ENCODE measurements at regions of chr17 and their contacts with region 1.

Region 1: DNA sequence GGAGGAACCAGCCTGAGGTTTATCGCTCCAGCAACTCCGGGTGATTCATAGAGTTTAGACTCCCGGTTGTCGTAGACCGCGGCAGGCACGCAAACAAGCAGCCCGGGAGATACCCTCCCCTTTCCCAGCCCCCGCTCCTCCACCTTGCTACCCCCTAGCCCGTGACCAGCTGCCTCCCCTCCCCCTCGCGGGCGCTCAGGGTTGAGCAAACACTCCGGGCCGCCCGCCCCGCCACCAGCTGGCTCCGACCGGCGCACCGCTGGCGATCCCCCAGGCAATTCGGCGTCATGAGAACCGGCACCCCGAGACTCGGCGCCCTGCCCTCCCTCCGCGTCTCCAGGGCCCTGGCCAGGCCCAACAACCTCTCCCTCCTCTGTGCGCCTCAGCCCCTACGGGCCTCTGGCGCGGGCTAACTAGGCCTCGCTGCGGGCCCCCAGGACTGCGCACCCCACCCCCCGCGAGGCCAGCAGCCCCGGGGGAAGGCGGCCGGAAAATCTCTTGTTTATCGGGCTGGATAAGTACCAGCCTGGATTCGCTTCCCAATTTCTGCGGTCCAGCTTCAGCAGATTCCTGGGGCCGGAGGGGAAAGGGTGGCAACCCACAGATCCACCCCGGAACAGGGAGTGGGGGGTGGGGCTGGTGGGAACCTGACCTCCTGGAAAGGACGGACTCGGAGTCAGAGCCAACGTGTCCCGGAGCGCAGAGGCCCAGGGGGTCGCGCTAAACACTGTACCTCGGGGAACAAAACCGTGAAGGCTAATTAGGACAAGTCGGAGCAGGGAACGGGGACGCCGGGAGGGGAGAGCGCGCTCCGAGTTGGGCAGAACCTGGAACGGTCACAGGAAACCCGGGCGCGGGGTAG is 951 bp upstream of the GPRC5C start:
- DNase-seq: peak; percentile 85 to 86
- ATAC-seq: peak; percentile 61 to 83 (median 73)
- H3K4me3 ChIP-seq: peak overlapping the region; percentile 61 to 83 (median 74)
- H3K27ac ChIP-seq: peak overlapping the region; percentile 83 to 99 (median 96)
- H3K4me1 ChIP-seq: peaks cover 8 to 80% (median 48%) of the 10 kb centered on the region in 9 donors
- H3K27me3 ChIP-seq: peaks cover 0 to 61% (median 0%) of the 10 kb centered on the region in 7 donors
- CTCF ChIP-seq: no peak

Region 2: GRCh38 chr17:74457146-74457819 is 26.3 kb after region 1 on chr17:
- intact Hi-C with region 1: loop called in 1 of 10 experiments (anchors 2 kb)
- DNase-seq: peak; percentile 81 to 84
- ATAC-seq: peak in 5 of 8 donors; percentile 17 to 28 (median 23)
- H3K4me3 ChIP-seq: peak overlapping the region in 3 of 10 donors; percentile 4 to 21 (median 8)
- H3K27ac ChIP-seq: peak overlapping the region in 5 of 10 donors; percentile 13 to 47 (median 28)
- H3K4me1 ChIP-seq: peaks cover 23 to 56% (median 40%) of the 10 kb centered on the region in 9 donors
- H3K27me3 ChIP-seq: peaks cover 0 to 9% (median 0%) of the 10 kb centered on the region in 7 donors
- CTCF ChIP-seq: peak; percentile 91 to 99 (median 96)

Measured in heart right ventricle (tissue), 16 donors.